Adrenal gland (tissue), 19 donors: ENCODE measurements at regions of chr4 and their contacts with region 1.

Region 1: GRCh38 chr4:139392797-139393196 is 61.1 kb upstream of the RAB33B start:
- DNase-seq: no peak
- H3K4me3 ChIP-seq: no peak overlapping the region
- H3K27ac ChIP-seq: no peak overlapping the region
- H3K4me1 ChIP-seq: no peaks in the 10 kb centered on the region
- H3K27me3 ChIP-seq: no peaks in the 10 kb centered on the region
- CTCF ChIP-seq: no peak
- POLR2A ChIP-seq: no peak

Region 2: GRCh38 chr4:139208404-139208945 is 184.3 kb before region 1 on chr4:
- intact Hi-C with region 1: loop called in 1 of 2 experiments (anchors 10 kb)
- DNase-seq: peak; percentile 43 to 84 (median 57)
- H3K4me3 ChIP-seq: no peak overlapping the region
- H3K27ac ChIP-seq: peak overlapping the region in 4 of 5 donors; percentile 1 to 90 (median 66)
- H3K4me1 ChIP-seq: peaks cover 12 to 18% of the 10 kb centered on the region in 2 donors
- H3K27me3 ChIP-seq: no peaks in the 10 kb centered on the region
- CTCF ChIP-seq: no peak
- POLR2A ChIP-seq: no peak

Region 3: GRCh38 chr4:139441029-139441428 is 48.2 kb after region 1 on chr4:
- intact Hi-C with region 1: no loop called
- DNase-seq: no peak
- H3K4me3 ChIP-seq: no peak overlapping the region
- H3K27ac ChIP-seq: no peak overlapping the region
- H3K4me1 ChIP-seq: no peaks in the 10 kb centered on the region
- H3K27me3 ChIP-seq: no peaks in the 10 kb centered on the region
- CTCF ChIP-seq: no peak
- POLR2A ChIP-seq: no peak